T-cell (primary cell): ENCODE measurements at regions of chr1 and their contacts with region 1.

Region 1: GRCh38 chr1:156129706-156130581 is 15.4 kb downstream of the LMNA start:
- DNase-seq: peak in 33 of 35 experiments; percentile 25 to 86 (median 69)
- ATAC-seq: peak in 3 of 4 experiments; percentile 10 to 41 (median 18)
- H3K4me3 ChIP-seq: no peak overlapping the region
- H3K4me3 Mint-ChIP-seq: peak overlapping the region in 1 of 3 donors; percentile 73
- H3K27ac ChIP-seq: no peak overlapping the region
- H3K27ac Mint-ChIP-seq: peak overlapping the region in 1 of 2 donors; percentile 55
- H3K4me1 ChIP-seq: peaks cover 23 to 57% of the 10 kb centered on the region in 2 experiments
- H3K4me1 Mint-ChIP-seq: peaks cover 49 to 53% (median 52%) of the 10 kb centered on the region in 3 donors
- H3K27me3 ChIP-seq: peaks cover 0 to 17% of the 10 kb centered on the region in 2 experiments
- H3K27me3 Mint-ChIP-seq: no peaks in the 10 kb centered on the region

Region 2: GRCh38 chr1:156090822-156091188 is 39.1 kb before region 1 on chr1:
- CTCF ChIA-PET with region 1: interaction called, 47 to 115 read pairs
- POLR2A ChIA-PET with region 1: interaction called, 9 to 18 read pairs
- DNase-seq: peak; percentile 71 to 94 (median 86)
- ATAC-seq: peak; percentile 92 to 97 (median 96)
- H3K4me3 ChIP-seq: no peak overlapping the region
- H3K4me3 Mint-ChIP-seq: no peak overlapping the region
- H3K27ac ChIP-seq: no peak overlapping the region
- H3K27ac Mint-ChIP-seq: peak overlapping the region in 1 of 2 donors; percentile 41
- H3K4me1 ChIP-seq: peaks cover 2 to 13% of the 10 kb centered on the region in 2 experiments
- H3K4me1 Mint-ChIP-seq: peaks cover 9 to 18% (median 14%) of the 10 kb centered on the region in 3 donors
- H3K27me3 ChIP-seq: peaks cover 0 to 38% of the 10 kb centered on the region in 2 experiments
- H3K27me3 Mint-ChIP-seq: peaks cover 20 to 21% of the 10 kb centered on the region in 2 donors

Region 3: DNA sequence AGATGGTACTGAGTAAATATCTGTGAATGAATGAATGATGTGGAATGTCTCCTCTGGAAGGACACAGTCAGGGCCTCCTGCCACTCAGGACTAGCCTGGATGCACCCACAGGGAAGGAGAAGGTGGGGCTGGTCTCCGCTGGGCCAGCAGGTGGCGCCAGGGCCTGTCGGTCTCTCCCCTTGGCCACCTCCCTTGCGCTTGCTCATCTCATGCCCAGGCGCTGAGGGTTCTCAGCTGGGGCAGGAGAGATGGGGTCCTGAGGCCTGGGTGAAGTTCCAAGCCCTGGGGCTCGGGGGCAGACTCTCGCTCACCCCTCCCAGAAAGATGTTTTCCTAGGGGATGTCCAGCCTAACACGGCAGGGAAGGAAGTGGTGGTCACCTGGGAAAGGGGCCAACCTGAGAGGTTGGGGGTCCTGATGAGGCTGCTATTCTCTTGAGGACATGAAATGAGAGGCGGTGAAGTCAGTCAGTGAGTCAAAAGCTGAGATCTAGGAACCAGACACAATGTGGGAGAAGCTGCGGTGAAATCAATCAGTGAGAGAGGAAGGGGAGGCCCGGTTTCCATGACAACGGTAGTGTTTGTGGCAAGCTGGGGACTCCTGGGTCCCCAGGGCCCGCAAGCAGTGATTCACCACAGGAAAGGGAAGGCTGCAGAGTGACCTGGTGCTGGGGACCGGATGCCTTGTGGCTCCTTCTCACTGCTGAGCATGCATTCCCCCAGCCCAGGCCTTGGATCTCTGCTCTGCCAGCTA is 33.1 kb before region 1 on chr1:
- CTCF ChIA-PET with region 1: interaction called, 47 to 115 read pairs
- POLR2A ChIA-PET with region 1: interaction called, 9 to 18 read pairs
- DNase-seq: peak; percentile 67 to 96 (median 83)
- ATAC-seq: peak; percentile 81 to 85 (median 82)
- H3K4me3 ChIP-seq: peak overlapping the region; percentile 17 to 35
- H3K4me3 Mint-ChIP-seq: peak overlapping the region; percentile 48 to 64 (median 53)
- H3K27ac ChIP-seq: peak overlapping the region; percentile 95
- H3K27ac Mint-ChIP-seq: peak overlapping the region; percentile 81 to 93
- H3K4me1 ChIP-seq: peaks cover 12 to 28% of the 10 kb centered on the region in 2 experiments
- H3K4me1 Mint-ChIP-seq: peaks cover 37 to 52% (median 41%) of the 10 kb centered on the region in 3 donors
- H3K27me3 ChIP-seq: peaks cover 0 to 2% of the 10 kb centered on the region in 2 experiments
- H3K27me3 Mint-ChIP-seq: peaks cover 0 to 4% of the 10 kb centered on the region in 2 donors

Region 4: DNA sequence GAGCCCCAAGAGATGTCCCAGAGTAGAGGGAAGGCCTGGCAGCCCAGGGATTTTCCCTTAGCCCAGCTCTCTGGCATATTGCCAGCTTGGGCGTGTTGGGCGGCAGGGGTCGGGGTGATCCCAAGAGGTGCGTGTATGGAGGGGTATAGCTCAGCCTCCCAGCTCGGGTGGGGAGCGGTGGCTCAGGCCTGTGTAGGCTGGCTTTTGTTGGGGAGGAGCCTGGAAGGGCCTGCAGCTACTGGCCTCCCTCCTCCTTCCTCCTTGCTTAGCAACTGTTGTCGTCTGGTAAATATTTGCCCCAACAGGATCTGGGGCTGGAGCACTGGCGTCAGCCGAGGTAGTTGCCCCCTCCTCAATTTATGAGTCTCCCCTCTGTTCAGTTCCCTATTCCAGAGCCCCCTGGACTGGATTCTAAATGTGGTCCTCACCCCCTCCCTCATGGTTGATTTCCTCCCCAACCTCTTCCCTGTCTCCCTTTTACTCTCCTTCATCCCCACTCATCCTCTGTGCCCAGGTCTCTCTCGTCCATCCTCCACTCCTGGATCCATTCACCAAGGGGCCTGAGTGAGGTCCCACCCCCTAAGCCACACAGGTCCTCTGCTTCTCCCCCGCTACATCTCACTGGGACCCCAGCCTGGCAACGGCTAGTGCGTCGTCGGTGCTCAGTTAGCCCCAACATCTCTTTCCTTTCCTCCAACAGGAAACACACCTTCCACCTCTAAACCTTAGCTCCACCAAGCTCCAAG is 25.7 kb before region 1 on chr1:
- CTCF ChIA-PET with region 1: interaction called, 7 to 14 read pairs
- POLR2A ChIA-PET with region 1: interaction called, 3 to 5 read pairs
- DNase-seq: peak in 27 of 35 experiments; percentile 18 to 79 (median 51)
- ATAC-seq: peak in 2 of 4 experiments; percentile 19 to 25
- H3K4me3 ChIP-seq: no peak overlapping the region
- H3K4me3 Mint-ChIP-seq: peak overlapping the region in 1 of 3 donors; percentile 80
- H3K27ac ChIP-seq: peak overlapping the region; percentile 99
- H3K27ac Mint-ChIP-seq: peak overlapping the region; percentile 75 to 76
- H3K4me1 ChIP-seq: peaks cover 14 to 45% of the 10 kb centered on the region in 2 experiments
- H3K4me1 Mint-ChIP-seq: peaks cover 50 to 70% (median 56%) of the 10 kb centered on the region in 3 donors
- H3K27me3 ChIP-seq: no peaks in the 10 kb centered on the region
- H3K27me3 Mint-ChIP-seq: no peaks in the 10 kb centered on the region

Region 5: GRCh38 chr1:156114101-156114916 is 15.6 kb before region 1 on chr1 and contains the start of gene LMNA:
- CTCF ChIA-PET with region 1: interaction called, 4 to 15 read pairs
- POLR2A ChIA-PET with region 1: interaction called, 4 to 10 read pairs
- DNase-seq: peak in 34 of 35 experiments; percentile 20 to 85 (median 53)
- ATAC-seq: peak; percentile 77 to 84 (median 82)
- H3K4me3 ChIP-seq: peak within 1 kb of the TSS; percentile 78 to 86
- H3K4me3 Mint-ChIP-seq: peak within 1 kb of the TSS; percentile 85 to 93 (median 92)
- H3K27ac ChIP-seq: peak within 1 kb of the TSS; percentile 68
- H3K27ac Mint-ChIP-seq: peak within 1 kb of the TSS; percentile 75 to 79
- H3K4me1 ChIP-seq: peaks cover 0 to 34% of the 10 kb centered on the region in 2 experiments
- H3K4me1 Mint-ChIP-seq: peaks cover 23 to 41% (median 33%) of the 10 kb centered on the region in 3 donors
- H3K27me3 ChIP-seq: peaks cover 6 to 37% of the 10 kb centered on the region in 2 experiments
- H3K27me3 Mint-ChIP-seq: peaks cover 17 to 18% of the 10 kb centered on the region in 2 donors
- total RNA-seq, gene LMNA: 40.3 to 970 (median 57.3) TPM

Region 6: GRCh38 chr1:156435545-156436141 is 305.7 kb after region 1 on chr1:
- CTCF ChIA-PET with region 1: no interaction called
- POLR2A ChIA-PET with region 1: no interaction called
- DNase-seq: peak in 6 of 35 experiments; percentile 13 to 51 (median 20)
- ATAC-seq: peak; percentile 32 to 56 (median 50)
- H3K4me3 ChIP-seq: peak overlapping the region; percentile 26 to 68
- H3K4me3 Mint-ChIP-seq: peak overlapping the region; percentile 74 to 78 (median 76)
- H3K27ac ChIP-seq: no peak overlapping the region
- H3K27ac Mint-ChIP-seq: peak overlapping the region in 1 of 2 donors; percentile 62
- H3K4me1 ChIP-seq: peaks cover 11 to 34% of the 10 kb centered on the region in 2 experiments
- H3K4me1 Mint-ChIP-seq: peaks cover 26 to 41% (median 29%) of the 10 kb centered on the region in 3 donors
- H3K27me3 ChIP-seq: peaks cover 29 to 81% of the 10 kb centered on the region in 2 experiments
- H3K27me3 Mint-ChIP-seq: peaks cover 76 to 89% of the 10 kb centered on the region in 2 donors